SK-N-SH (cell line): ENCODE measurements at regions of chr2 and their contacts with region 1.

Region 1: GRCh38 chr2:241724259-241724974 is 10.0 kb upstream of the D2HGDH start:
- DNase-seq: peak; percentile 66
- H3K4me3 ChIP-seq: no peak overlapping the region
- H3K27ac ChIP-seq: no peak overlapping the region
- H3K4me1 ChIP-seq: peaks cover 0 to 2% of the 10 kb centered on the region in 2 experiments; a peak in 1 of 4 replicates
- H3K27me3 ChIP-seq: no peaks in the 10 kb centered on the region
- CTCF ChIP-seq: no peak; the same call in 1 of the 2 replicates
- EP300 ChIP-seq: no peak
- RAD21 ChIP-seq: peak; percentile 53

Region 2: DNA sequence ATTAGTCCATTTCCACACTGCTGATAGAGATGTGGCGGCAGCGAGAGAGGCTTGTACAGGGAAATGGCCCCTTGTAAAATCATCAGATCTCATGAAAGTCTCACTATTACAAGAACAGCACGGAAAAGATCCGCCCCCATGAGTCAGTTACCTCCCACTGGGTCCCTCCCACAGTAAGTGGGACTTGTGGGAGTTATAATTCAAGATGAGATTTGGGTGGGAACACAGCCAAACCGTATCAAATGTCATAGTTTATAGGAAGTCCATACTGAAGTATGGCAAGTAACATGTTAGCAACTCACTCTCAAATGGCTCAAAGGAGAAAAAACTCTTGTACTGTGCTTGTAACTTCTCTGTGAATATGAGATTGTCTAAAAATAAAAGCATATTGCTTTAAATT is 312.3 kb before region 1 on chr2:
- CTCF ChIA-PET with region 1: no interaction called
- POLR2A ChIA-PET with region 1: no interaction called
- DNase-seq: no peak
- H3K4me3 ChIP-seq: no peak overlapping the region
- H3K27ac ChIP-seq: peak overlapping the region in 1 of 2 experiments; percentile 23; a peak in 2 of 4 replicates
- H3K4me1 ChIP-seq: peaks cover 0 to 13% of the 10 kb centered on the region in 2 experiments; a peak in 1 of 4 replicates
- H3K27me3 ChIP-seq: no peaks in the 10 kb centered on the region
- CTCF ChIP-seq: no peak
- EP300 ChIP-seq: no peak
- RAD21 ChIP-seq: no peak

Region 3: DNA sequence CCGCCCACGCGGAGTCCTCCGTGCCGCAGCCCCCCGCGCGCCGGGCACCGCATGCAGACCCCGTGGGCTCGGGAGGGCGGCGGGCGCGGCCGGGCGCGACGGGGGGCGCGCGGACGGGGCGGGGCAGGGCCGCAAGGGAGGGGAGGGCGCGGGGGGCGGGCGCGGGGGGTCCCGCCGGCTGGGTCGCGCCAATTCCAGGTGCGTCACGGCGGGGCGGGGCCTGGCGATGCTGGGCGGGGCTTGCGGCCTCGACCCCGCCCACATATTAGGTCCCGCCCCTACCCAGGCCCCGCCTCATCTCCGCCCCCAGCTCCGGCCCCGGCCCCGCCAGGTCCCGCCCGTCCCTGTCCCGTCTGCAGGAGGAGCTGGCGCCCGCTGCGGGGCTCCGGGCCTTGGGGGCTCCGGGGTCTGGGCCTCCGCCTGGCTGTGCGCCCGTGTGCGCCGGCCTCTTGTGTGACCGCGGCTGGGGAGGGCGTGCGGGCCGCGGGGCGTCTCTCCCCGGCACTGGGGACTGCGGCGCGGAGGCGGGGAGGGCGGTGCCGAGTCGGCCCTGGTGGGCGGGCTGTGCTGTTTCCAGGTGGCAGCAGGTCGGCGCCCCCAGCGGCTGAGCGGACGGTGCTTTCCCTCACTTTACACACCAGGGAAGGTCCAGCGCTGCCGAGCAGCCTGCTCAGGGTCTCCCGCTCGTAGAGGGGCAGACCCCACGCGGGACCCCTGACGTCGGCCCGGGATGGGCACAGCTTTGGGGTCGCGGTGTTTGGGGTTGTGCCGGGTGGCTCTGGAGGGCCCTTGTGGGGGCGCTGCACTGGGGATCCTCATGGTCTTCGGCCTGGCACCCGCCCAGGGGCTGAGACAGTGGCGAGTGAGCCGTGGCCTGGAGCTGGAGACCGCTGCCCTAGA is 22.0 kb before region 1 on chr2:
- CTCF ChIA-PET with region 1: interaction called, 34 read pairs
- POLR2A ChIA-PET with region 1: no interaction called
- DNase-seq: peak; percentile 96
- H3K4me3 ChIP-seq: peak overlapping the region; percentile 63 to 88
- H3K27ac ChIP-seq: peak overlapping the region; percentile 78 to 86; a peak in 3 of 4 replicates
- H3K4me1 ChIP-seq: peaks cover 0 to 11% of the 10 kb centered on the region in 2 experiments; a peak in 1 of 4 replicates
- H3K27me3 ChIP-seq: no peaks in the 10 kb centered on the region
- CTCF ChIP-seq: peak; percentile 60
- EP300 ChIP-seq: no peak
- RAD21 ChIP-seq: no peak

Region 4: GRCh38 chr2:241750076-241750840 is 25.8 kb after region 1 on chr2:
- CTCF ChIA-PET with region 1: no interaction called
- POLR2A ChIA-PET with region 1: no interaction called
- DNase-seq: no peak
- H3K4me3 ChIP-seq: no peak overlapping the region
- H3K27ac ChIP-seq: no peak overlapping the region
- H3K4me1 ChIP-seq: no peaks in the 10 kb centered on the region
- H3K27me3 ChIP-seq: no peaks in the 10 kb centered on the region
- CTCF ChIP-seq: no peak
- EP300 ChIP-seq: no peak
- RAD21 ChIP-seq: no peak

Region 5: DNA sequence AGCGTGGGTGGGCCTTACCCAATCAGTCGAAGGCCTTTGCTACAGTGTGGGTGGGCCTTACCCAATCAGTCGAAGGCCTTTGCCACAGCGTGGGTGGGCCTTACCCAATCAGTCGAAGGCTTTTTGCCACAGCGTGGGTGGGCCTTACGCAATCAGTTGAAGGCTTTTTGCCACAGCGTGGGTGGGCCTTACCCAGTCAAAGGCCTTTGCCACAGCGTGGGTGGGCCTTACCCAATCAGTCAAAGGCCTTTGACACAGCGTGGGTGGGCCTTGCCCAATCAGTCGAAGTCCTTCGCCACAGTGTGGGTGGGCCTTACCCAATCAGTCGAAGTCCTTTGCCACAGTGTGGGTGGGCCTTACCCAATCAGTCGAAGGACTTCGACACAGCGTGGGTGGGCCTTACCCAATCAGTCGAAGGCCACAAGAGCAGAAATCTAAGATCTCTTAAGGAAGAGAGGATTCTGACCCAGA is 35.9 kb after region 1 on chr2:
- CTCF ChIA-PET with region 1: no interaction called
- POLR2A ChIA-PET with region 1: no interaction called
- DNase-seq: peak; percentile 19
- H3K4me3 ChIP-seq: no peak overlapping the region
- H3K27ac ChIP-seq: no peak overlapping the region
- H3K4me1 ChIP-seq: peaks cover 0 to 27% of the 10 kb centered on the region in 2 experiments; a peak in 1 of 4 replicates
- H3K27me3 ChIP-seq: no peaks in the 10 kb centered on the region
- CTCF ChIP-seq: no peak
- EP300 ChIP-seq: no peak
- RAD21 ChIP-seq: no peak